Common myeloid progenitor, CD34-positive (primary cell): ENCODE measurements at regions of chr19 and their contacts with region 1.

Region 1: GRCh38 chr19:10580979-10581631 is 6.0 kb downstream of the AP1M2 start:
- DNase-seq: peak; percentile 93 to 97 (median 94)
- H3K4me3 ChIP-seq: no peak overlapping the region
- H3K27ac ChIP-seq: no peak overlapping the region
- H3K4me1 ChIP-seq: peaks cover 0 to 6% (median 2%) of the 10 kb centered on the region in 4 experiments
- H3K27me3 ChIP-seq: no peaks in the 10 kb centered on the region

Region 2: DNA sequence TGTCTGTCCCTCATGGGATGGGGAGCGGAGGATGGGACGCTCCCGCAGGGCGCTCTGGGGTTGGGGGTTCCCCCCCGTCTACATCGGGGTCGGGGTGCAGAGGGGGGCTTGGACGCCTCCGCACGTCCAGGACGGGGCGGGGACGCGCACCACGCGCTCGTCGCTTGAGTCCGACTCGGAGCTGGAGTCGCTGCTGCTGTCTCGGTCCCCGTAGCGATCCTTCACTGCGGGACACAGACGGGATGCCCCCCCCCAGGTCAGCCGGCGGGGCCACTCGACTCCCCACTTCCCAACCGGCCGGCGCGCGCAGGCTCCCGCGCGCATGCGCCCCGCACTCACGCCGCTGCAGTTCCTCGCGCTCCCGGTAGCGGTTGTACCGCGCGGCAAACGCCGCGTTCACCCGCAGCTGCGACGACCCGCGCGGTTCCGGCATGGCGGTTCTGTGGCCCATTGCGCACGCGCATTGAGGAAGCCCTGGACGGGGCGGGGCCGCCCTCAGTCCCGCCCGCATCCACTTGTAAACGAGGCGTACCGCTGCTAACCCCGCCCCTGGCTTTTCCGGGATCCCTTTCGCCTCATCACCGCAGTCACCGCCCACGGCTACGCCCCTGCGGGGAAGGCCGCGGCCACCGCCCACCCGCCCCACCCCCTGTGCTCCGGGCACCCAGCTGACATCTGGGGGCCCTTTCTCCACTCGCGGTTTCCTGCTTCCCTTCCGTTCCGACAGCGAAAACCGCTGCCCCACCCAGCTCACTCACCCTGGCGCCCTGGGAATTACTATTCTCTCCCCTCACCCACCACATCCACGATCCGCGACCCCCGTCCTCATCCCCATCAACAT is 15.3 kb before region 1 on chr19 and contains the start of gene KRI1:
- CTCF ChIA-PET with region 1: interaction called, 10 read pairs
- POLR2A ChIA-PET with region 1: no interaction called
- DNase-seq: peak; percentile 97 to 99 (median 98)
- H3K4me3 ChIP-seq: peak within 1 kb of the TSS; percentile 76 to 93 (median 88)
- H3K27ac ChIP-seq: peak within 1 kb of the TSS; percentile 46 to 78
- H3K4me1 ChIP-seq: peaks cover 16 to 49% (median 46%) of the 10 kb centered on the region in 4 experiments
- H3K27me3 ChIP-seq: no peaks in the 10 kb centered on the region

Region 3: DNA sequence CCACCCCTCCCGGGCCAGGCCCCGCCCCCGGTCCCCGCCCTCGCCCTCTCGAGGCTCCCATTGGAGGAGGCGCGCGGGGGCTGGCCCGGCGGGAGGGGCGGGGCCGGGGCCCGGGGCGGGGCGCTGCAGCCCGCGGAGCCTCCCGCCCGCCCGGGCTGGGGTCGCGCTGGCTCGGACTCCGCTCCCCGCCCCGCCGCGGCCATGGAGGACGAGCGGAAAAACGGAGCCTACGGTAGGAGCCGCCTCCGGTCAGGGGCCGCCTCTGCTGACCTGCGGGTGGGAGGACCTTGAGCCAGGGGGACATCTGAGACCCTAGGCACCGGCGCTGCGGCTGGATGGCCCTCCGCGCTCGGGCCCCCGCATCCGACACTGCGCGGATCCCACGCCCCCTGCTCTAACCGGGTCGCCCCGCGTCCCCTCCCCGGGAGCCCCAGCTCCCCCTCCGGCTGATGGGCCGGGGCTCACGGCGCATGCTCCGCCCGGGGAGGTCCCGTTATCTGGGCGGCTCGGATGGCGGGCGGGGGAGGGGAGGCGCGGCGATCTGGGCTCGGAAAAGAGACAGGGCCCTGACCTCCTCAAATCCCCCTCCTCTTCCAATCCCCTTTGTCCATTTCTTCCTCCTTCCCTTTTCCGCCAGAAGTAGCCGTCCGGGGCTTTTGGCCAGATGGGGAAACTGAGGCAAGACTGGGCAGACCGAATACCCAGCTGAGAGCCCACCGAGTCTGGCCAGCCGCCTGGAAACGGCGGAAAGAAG is 21.4 kb after region 1 on chr19:
- CTCF ChIA-PET with region 1: interaction called, 12 read pairs
- POLR2A ChIA-PET with region 1: no interaction called
- DNase-seq: peak; percentile 65 to 80 (median 75)
- H3K4me3 ChIP-seq: peak overlapping the region; percentile 85 to 95 (median 91)
- H3K27ac ChIP-seq: peak overlapping the region; percentile 52 to 86
- H3K4me1 ChIP-seq: peaks cover 10 to 42% (median 32%) of the 10 kb centered on the region in 4 experiments
- H3K27me3 ChIP-seq: no peaks in the 10 kb centered on the region

Region 4: DNA sequence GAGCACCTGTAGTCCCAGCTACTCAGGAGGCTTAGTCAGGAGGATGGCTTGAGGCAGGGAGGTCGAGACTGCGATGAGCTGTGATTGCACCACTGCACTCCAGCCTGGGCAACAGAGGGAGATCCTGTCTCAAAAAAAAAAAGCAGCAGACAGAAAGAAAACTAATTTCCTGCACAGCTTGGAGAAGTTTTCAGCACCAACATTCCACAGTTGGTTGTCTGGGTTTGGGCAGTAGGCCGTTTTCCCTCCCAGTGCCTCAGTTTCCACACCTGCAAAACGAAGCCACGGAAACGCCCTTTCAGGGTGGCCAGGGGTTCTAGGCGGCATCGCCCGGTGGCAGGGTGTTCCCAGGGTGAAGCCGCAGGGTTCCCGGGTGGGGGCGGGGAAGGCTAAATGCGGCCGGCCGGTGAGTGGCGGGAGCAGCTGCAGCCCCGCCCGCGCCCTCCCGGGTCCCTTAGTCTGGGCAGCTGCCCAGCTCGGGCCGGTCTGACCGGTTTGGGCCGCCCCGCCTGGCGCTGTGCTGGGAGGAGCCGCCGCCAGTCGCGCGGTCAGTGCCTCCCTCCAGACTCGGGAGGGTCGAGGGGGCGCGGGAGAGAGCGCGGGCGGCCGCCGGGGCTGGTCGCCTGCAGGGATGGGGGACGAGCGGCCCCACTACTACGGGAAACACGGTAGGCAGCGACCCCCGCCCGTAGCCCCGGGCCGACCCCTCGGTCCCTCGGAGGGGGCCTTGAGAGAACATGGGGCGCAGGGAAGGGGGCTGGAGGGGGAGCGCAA is 44.1 kb after region 1 on chr19 and contains the start of gene SLC44A2:
- CTCF ChIA-PET with region 1: interaction called, 25 read pairs
- POLR2A ChIA-PET with region 1: no interaction called
- DNase-seq: no peak
- H3K4me3 ChIP-seq: no peak within 1 kb of the TSS
- H3K27ac ChIP-seq: no peak within 1 kb of the TSS
- H3K4me1 ChIP-seq: no peaks in the 10 kb centered on the region
- H3K27me3 ChIP-seq: no peaks in the 10 kb centered on the region

Region 5: GRCh38 chr19:10699650-10700335 is 118.7 kb after region 1 on chr19:
- CTCF ChIA-PET with region 1: interaction called, 37 read pairs
- POLR2A ChIA-PET with region 1: no interaction called
- DNase-seq: peak; percentile 71 to 87 (median 83)
- H3K4me3 ChIP-seq: no peak overlapping the region
- H3K27ac ChIP-seq: no peak overlapping the region
- H3K4me1 ChIP-seq: peaks cover 0 to 27% (median 22%) of the 10 kb centered on the region in 4 experiments
- H3K27me3 ChIP-seq: peaks cover 0 to 6% (median 0%) of the 10 kb centered on the region in 5 experiments